Lower leg skin (tissue), 4 donors: ENCODE measurements at regions of chr1 and their contacts with region 1.

Region 1: DNA sequence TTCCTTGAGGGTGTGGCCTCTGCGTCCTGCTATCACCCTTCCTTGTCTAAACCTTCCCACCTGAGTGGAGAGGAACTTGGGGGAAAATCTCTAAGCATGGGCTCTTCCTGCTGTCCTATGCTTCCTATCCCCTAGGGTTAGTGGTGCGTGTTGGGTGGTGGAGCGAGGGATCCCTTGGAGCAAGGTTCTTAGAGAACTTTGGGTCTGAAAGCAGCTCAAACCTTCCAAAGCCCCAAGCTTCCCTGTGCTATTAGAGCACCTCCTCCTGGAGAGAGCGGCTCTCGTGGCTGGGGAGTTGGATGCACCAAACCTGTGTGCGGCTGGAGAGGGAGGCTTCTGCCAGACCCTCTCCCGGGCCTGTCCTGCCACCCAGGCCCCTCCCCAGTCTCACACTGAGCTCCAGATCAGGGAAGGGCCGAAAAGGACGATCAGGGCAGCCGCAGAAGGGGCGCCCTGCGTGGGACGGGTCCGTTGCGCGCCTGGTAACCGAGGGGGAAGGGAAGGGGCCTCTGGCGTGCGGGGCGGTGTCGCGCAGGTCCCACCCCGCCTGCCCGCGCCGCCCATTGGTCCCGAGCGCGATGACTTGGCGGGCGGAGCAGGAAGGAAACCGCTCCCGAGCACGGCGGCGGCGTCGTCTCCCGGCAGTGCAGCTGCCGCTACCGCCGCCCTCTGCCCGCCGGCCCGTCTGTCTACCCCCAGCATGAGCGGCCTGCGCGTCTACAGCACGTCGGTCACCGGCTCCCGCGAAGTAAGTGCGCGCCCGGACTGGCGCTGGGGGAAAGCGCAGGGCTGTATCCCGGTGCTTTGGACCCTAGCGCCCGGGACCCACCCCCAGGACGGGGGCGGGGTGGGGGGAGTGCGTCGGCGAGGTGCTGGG is at the start of gene SH3BGRL3:
- DNase-seq: peak; percentile 85 to 98
- H3K4me3 ChIP-seq: peak within 1 kb of the TSS; percentile 75
- CTCF ChIP-seq: no peak
- POLR2A ChIP-seq: peak in 1 of 2 donors; percentile 48
- total RNA-seq, gene SH3BGRL3: 74.8 to 97.1 (median 78.3) TPM

Region 2: GRCh38 chr1:25247024-25247828 is 1032.5 kb before region 1 on chr1 and contains the start of gene RSRP1:
- intact Hi-C with region 1: loop called (anchors 5 kb)
- DNase-seq: peak; percentile 98 to 100
- H3K4me3 ChIP-seq: peak within 1 kb of the TSS; percentile 79
- CTCF ChIP-seq: no peak
- POLR2A ChIP-seq: peak in 1 of 2 donors; percentile 99
- total RNA-seq, gene RSRP1: 70.9 to 148 (median 110) TPM

Region 3: GRCh38 chr1:26237230-26237966 is 42.3 kb before region 1 on chr1:
- intact Hi-C with region 1: no loop called
- DNase-seq: no peak
- H3K4me3 ChIP-seq: no peak overlapping the region
- CTCF ChIP-seq: no peak
- POLR2A ChIP-seq: no peak